Tibial artery (tissue), 4 donors: ENCODE measurements at regions of chr20 and their contacts with region 1.

Region 1: GRCh38 chr20:34129518-34130162 is 17.6 kb upstream of the EIF2S2 start:
- DNase-seq: peak in 1 of 2 donors; percentile 51
- H3K4me3 ChIP-seq: no peak overlapping the region
- H3K27ac ChIP-seq: no peak overlapping the region
- H3K4me1 ChIP-seq: peaks cover 0 to 3% (median 0%) of the 10 kb centered on the region in 4 donors
- H3K27me3 ChIP-seq: no peaks in the 10 kb centered on the region
- CTCF ChIP-seq: peak; percentile 83 to 84

Region 2: GRCh38 chr20:33862709-33863403 is 266.8 kb before region 1 on chr20:
- intact Hi-C with region 1: loop called (anchors 1 kb)
- DNase-seq: peak; percentile 31 to 69
- H3K4me3 ChIP-seq: no peak overlapping the region
- H3K27ac ChIP-seq: no peak overlapping the region
- H3K4me1 ChIP-seq: peaks cover 0 to 8% (median 6%) of the 10 kb centered on the region in 4 donors
- H3K27me3 ChIP-seq: no peaks in the 10 kb centered on the region
- CTCF ChIP-seq: peak; percentile 61 to 63

Region 3: DNA sequence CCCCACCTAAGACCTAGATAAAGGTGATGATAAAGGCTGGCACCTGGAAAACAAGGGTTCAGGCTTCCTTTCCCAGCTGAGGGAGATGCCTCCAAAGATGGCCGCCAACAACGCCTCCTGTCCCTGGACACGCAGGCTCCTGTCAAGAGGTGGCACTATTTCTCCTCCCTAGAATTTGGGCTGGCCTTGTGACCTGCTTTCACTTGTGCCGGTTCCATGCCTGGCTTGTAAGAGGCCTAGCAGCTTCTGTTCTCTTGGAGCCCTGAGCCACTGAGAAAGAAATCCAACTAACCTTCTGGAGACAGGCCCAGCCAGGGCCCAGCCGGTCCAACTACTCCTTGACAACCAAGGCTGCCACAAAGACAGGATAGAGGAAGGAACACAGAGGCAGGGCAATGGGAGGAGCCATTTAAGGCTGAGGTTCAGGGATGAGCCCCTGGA is 196.2 kb before region 1 on chr20:
- intact Hi-C with region 1: loop called (anchors 2 kb)
- DNase-seq: peak; percentile 55 to 87
- H3K4me3 ChIP-seq: no peak overlapping the region
- H3K27ac ChIP-seq: peak overlapping the region; percentile 54 to 56
- H3K4me1 ChIP-seq: no peaks in the 10 kb centered on the region
- H3K27me3 ChIP-seq: no peaks in the 10 kb centered on the region
- CTCF ChIP-seq: peak; percentile 57 to 60

Region 4: GRCh38 chr20:34069341-34070078 is 60.1 kb before region 1 on chr20:
- intact Hi-C with region 1: loop called (anchors 5 kb)
- DNase-seq: peak; percentile 78 to 80
- H3K4me3 ChIP-seq: no peak overlapping the region
- H3K27ac ChIP-seq: peak overlapping the region in 1 of 2 donors; percentile 14
- H3K4me1 ChIP-seq: peaks cover 0 to 40% (median 22%) of the 10 kb centered on the region in 4 donors
- H3K27me3 ChIP-seq: no peaks in the 10 kb centered on the region
- CTCF ChIP-seq: peak; percentile 77 to 91

Region 5: DNA sequence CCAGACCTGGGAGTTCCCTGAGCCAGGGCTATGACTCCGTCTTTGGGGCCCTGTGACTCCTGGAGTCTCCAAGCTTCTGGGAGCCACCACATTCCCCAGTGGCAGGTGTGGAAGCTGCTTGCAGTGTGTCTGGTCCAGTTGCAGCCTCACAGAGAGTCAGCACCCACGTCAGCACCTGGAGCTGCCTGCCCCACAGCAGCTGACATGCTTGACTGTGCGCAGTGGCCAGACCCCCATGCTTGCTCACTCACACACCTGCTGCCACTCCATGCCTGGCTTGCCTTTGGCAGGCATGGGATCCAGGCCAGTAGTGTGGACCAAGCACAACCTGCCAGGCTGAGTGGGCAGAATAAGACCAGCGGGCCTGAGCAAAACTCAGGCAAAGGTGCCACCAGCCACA is 80.6 kb after region 1 on chr20:
- intact Hi-C with region 1: no loop called
- DNase-seq: no peak
- H3K4me3 ChIP-seq: no peak overlapping the region
- H3K27ac ChIP-seq: no peak overlapping the region
- H3K4me1 ChIP-seq: peaks cover 0 to 1% (median 0%) of the 10 kb centered on the region in 4 donors
- H3K27me3 ChIP-seq: peaks cover 0 to 9% of the 10 kb centered on the region in 2 donors
- CTCF ChIP-seq: no peak